ENCODE measurements at regions of chr19 and their contacts with region 1.

Region 1: DNA sequence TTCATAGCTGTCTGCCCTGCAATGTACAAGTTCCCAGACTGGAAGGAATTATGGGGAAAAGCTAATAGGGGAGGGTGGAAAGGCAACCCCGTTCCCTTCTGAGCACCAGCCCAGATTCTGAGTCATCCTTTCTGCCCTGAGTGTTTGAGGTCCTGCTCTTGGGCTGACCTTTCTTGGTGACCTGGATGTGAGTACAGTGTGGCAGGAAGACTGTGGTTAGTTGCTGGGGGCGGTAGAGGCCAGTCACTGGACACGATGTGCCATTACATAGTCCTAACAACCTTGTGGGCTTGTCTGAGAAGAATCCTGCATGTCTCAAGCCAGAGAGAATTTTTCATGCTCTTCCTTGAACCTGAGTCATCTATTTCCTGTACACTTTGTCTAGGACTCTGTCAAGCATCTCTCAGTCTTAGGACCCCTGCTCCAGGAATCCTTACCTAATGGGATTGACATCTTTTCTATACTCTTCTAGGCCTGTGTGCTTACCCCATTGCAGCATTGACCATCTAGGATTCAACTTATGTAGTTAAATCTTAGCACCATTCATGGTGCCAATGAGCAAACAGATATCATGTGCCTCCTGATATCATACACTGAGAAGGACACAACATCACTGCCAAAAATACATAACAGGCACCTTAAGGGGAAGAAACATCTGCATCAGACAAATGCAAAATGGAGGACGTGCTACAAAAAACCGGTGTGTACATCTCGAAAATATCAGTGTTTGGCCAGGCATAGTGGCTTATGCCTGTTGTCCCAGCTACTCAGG is 8.1 kb upstream of the ANGPTL4 start:
- DNase-seq: peak; percentile 75
- H3K4me3 ChIP-seq: no peak overlapping the region
- CTCF ChIP-seq: no peak

Region 2: DNA sequence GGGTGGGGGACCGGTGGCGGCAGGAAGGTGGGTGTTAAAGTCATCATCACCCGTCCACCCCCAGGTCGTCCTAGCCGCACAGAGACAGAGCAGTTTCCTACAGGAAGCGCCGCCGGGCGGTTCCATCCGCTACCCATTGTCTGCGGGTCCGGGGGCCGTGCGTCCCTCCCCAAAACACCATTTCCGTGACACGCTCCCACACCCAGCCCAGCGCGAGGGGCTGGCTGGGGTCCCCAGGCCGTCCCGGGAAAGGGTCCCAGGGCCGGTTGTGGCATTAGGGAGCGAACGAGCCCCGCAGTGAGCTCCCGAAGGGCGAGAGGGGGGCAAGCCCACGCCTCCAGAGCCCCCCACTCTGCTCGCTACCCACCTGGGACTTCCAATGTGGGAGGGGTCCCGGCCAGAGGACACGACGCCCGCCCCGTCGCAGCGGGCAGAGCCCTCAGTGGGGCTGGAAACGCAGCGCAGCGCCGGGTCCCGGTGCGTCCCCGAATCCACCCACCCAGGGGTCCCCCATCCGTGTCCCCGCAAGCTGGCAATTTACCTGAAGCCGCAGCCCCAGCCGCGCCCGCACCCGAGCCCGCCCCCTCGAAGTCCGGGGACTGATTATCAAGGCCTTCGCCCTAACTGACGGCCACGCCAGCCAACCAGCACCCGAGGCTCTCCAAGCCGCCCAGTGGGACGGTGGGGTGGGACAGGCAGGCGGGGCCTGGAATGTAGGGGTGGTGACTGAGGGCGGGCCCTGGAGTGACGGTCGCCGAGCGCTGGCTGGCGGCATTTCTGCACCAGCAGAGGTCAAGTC is 12.9 kb before region 1 on chr19 and contains the start of gene KANK3:
- CTCF ChIA-PET with region 1: interaction called, 65 read pairs
- POLR2A ChIA-PET with region 1: no interaction called
- DNase-seq: peak; percentile 45
- H3K4me3 ChIP-seq: peak within 1 kb of the TSS; percentile 43
- CTCF ChIP-seq: no peak

Region 3: GRCh38 chr19:8404391-8405151 is 48.8 kb after region 1 on chr19:
- CTCF ChIA-PET with region 1: interaction called, 20 read pairs
- POLR2A ChIA-PET with region 1: no interaction called
- DNase-seq: no peak
- H3K4me3 ChIP-seq: no peak overlapping the region
- CTCF ChIP-seq: no peak

Region 4: DNA sequence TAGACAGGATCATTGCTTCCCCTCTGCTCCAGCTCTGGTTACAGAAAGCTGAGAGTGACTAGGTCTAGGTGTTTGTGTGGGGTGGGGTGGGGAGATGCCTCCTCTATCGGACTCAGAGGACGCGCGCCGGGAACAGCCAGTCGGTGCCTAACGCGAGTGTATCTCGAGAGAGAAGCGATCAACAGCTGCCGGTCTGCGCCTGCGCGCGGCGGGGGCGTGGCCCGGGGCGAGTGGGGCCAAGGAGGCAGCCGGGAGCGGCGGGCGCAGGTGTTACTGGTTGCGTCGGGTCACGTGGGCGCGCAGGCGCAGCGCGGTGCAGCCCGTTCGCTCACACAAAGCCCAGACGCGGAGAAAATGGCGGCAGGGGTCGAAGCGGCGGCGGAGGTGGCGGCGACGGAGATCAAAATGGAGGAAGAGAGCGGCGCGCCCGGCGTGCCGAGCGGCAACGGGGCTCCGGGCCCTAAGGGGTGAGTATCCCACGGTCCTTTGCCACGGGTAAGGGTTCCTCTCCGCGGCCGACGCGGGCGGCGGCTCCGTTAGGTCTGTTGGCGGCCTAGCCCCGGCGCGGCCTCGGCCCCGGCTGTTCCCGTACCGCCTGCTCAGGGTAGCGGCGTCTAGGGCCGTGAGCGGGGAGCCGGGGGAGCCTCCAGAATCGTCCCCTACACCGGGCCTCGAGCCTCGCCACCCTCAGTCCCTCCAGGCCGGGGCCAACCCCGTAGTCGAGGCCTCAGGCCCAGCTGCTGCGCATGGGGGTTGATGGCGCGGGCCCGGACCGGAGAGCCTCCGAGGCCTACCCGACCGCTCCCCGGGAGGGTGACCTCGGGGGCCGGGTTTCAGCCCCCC is 89.0 kb after region 1 on chr19 and contains the start of gene HNRNPM:
- CTCF ChIA-PET with region 1: interaction called, 23 read pairs
- POLR2A ChIA-PET with region 1: interaction called, 3 read pairs
- DNase-seq: no peak
- H3K4me3 ChIP-seq: peak within 1 kb of the TSS; percentile 89
- CTCF ChIP-seq: no peak

Region 5: DNA sequence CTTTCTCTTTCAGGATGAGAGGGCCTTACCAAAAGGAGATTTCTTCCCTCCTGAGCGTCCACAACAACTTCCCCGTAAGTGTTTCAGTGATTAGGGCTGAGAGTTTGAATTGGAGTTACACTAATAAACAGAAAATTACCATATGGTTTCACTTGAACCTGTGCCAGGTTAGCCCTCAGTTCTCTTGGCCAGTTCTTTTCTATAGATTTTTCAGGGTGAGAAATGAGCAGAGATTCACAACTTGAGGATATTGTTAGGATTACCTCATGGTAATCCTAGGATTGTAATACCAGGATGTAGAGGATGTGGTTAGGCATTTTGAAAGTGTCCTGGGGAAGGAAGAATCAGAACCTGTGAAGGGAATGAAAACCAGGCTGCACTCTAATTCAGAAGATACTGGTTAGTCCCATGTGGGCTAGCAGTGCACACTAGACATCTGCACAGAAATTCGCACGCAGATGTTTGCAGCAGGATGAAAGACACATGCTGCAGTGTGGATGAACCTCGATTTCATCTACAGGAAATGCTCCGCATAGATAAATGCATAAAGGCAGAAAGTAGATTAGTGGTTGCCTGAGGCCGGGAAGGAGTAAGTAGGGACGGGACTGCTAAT is 113.0 kb after region 1 on chr19:
- CTCF ChIA-PET with region 1: interaction called, 27 read pairs
- POLR2A ChIA-PET with region 1: no interaction called
- DNase-seq: no peak
- H3K4me3 ChIP-seq: no peak overlapping the region
- CTCF ChIP-seq: no peak

Region 6: GRCh38 chr19:8513687-8514504 is 158.1 kb after region 1 on chr19 and contains the start of gene ZNF414:
- CTCF ChIA-PET with region 1: interaction called, 86 read pairs
- POLR2A ChIA-PET with region 1: interaction called, 3 read pairs
- DNase-seq: peak; percentile 84
- H3K4me3 ChIP-seq: peak within 1 kb of the TSS; percentile 79
- CTCF ChIP-seq: no peak

Region 7: DNA sequence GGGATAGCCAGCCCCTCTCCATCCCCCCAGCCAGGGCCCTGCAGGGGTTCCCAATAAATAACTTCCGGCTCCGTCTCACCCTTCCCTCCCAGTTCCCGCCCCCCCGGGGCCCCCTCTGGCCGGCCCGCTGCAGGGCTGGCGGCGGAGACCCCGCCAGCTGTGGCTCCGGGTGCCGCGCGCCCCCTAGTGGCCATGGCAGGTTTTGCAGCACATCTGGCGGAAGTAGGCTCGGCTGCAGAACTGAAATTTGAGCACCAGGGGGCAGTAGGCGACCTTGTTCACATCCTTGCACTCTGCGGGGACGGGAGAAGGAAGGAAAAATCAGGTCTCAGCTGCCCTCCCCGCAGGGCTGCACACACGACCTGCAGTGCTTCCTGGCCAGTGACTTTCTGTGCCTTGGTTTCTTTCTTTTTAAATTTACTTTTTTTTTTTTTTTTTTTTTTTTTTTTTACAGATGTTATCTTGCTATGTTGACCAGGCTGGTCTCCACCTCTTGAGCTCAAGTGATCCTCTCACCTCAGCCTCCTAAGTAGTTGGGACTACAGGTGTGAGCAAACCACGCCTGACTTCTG is 225.0 kb after region 1 on chr19:
- CTCF ChIA-PET with region 1: interaction called, 85 read pairs
- POLR2A ChIA-PET with region 1: no interaction called
- DNase-seq: no peak
- H3K4me3 ChIP-seq: no peak overlapping the region
- CTCF ChIP-seq: peak; percentile 99

Region 8: DNA sequence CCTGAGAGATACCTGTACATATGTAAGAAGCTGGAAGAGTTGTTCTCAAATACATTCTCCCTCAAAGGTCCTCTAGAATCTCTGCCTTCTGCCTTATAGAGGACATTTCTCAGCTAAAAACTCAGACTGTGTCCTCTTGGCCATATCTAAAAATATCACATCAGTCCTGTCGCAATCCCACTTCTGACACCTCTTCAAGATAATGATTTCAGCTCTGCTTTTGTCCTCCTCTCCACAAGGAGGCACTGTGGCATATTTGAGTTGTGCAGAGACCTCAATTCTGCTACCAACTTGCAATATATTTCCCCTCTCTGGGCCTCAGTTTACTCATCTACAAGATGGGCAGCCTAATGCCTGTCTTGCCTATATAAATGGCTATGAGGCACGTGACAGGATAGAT is 238.1 kb after region 1 on chr19:
- CTCF ChIA-PET with region 1: no interaction called
- POLR2A ChIA-PET with region 1: no interaction called
- DNase-seq: no peak
- H3K4me3 ChIP-seq: no peak overlapping the region
- CTCF ChIP-seq: no peak

Measured in AG04449 (cell line).